Natural killer cell (primary cell): ENCODE measurements at regions of chr3 and their contacts with region 1.

Region 1: DNA sequence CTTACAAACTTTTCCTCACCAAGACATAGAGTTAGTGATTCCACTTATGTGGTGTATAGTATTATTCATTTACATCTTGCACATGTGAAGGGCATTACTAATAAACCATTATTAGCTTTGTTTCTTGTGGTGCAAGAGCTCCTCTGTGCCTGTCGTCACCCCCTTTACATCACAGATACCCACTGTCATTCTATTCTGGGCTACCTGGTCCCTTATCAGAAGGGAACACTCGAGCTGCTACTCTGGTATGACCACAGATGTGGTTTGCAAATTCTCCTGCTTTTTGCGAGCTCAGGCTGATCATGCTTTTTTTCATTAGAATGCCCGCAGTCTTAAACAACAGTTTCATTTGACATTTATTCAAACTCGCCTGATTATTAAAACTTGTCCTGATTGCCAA is 13.9 kb upstream of the SENP2 start:
- DNase-seq: no peak
- ATAC-seq: no peak
- H3K4me3 ChIP-seq: no peak overlapping the region
- H3K4me3 Mint-ChIP-seq: no peak overlapping the region
- H3K27ac ChIP-seq: no peak overlapping the region
- H3K27ac Mint-ChIP-seq: no peak overlapping the region
- H3K4me1 ChIP-seq: peaks cover 4% of the 10 kb centered on the region
- H3K4me1 Mint-ChIP-seq: peaks cover 8 to 9% of the 10 kb centered on the region in 2 donors
- H3K27me3 ChIP-seq: no peaks in the 10 kb centered on the region
- H3K27me3 Mint-ChIP-seq: no peaks in the 10 kb centered on the region
- CTCF ChIP-seq: no peak

Region 2: GRCh38 chr3:185353823-185354614 is 218.2 kb before region 1 on chr3:
- intact Hi-C with region 1: loop called (anchors 2 kb)
- DNase-seq: peak; percentile 46 to 80
- ATAC-seq: peak; percentile 91 to 99 (median 98)
- H3K4me3 ChIP-seq: no peak overlapping the region
- H3K4me3 Mint-ChIP-seq: no peak overlapping the region
- H3K27ac ChIP-seq: no peak overlapping the region
- H3K27ac Mint-ChIP-seq: no peak overlapping the region
- H3K4me1 ChIP-seq: no peaks in the 10 kb centered on the region
- H3K4me1 Mint-ChIP-seq: no peaks in the 10 kb centered on the region
- H3K27me3 ChIP-seq: no peaks in the 10 kb centered on the region
- H3K27me3 Mint-ChIP-seq: peaks cover 7 to 11% of the 10 kb centered on the region in 2 donors
- CTCF ChIP-seq: peak; percentile 69